ENCODE measurements at regions of chr1 and their contacts with region 1.

Region 1: DNA sequence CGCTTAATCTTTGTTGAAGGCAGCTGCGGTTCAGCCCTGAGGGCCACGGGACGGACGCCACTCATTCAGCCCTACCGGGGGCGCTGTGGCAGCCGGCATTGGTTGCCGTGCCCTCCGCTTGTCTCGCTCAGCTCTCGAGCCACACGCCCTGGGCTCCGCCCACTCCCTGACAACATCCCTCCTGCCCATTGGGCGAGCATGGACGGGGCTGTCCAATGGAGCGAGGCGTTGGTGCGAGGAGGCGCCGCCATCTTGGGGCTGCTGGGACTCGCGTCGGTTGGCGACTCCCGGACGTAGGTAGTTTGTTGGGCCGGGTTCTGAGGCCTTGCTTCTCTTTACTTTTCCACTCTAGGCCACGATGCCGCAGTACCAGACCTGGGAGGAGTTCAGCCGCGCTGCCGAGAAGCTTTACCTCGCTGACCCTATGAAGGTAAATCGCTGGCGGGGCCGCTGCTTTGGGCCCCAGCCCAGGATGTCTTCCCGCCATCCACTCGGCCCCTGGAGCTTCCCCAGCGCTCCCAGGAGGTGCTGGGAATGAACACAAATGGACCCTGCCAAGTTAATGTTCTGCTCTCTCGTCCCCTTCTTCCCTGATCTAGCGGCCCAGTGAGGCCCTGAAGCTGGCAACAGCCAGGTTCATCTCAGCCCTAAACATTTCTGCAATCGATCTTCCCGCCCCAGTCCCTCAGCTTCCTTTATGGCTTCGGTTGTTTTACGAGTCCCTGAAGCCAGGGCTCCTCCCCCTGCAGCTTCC is at the start of gene SRP9:
- DNase-seq: peak; percentile 99
- H3K4me3 ChIP-seq: peak within 1 kb of the TSS; percentile 68 to 94
- H3K4me3 Mint-ChIP-seq: no peak within 1 kb of the TSS
- H3K27ac ChIP-seq: peak within 1 kb of the TSS; percentile 94
- H3K27ac Mint-ChIP-seq: no peak within 1 kb of the TSS
- H3K4me1 ChIP-seq: peaks cover 57% of the 10 kb centered on the region
- H3K4me1 Mint-ChIP-seq: peaks cover 0 to 32% (median 27%) of the 10 kb centered on the region in 4 donors
- H3K27me3 ChIP-seq: no peaks in the 10 kb centered on the region
- H3K27me3 Mint-ChIP-seq: no peaks in the 10 kb centered on the region
- total RNA-seq, gene SRP9: 141 to 151 TPM

Region 2: DNA sequence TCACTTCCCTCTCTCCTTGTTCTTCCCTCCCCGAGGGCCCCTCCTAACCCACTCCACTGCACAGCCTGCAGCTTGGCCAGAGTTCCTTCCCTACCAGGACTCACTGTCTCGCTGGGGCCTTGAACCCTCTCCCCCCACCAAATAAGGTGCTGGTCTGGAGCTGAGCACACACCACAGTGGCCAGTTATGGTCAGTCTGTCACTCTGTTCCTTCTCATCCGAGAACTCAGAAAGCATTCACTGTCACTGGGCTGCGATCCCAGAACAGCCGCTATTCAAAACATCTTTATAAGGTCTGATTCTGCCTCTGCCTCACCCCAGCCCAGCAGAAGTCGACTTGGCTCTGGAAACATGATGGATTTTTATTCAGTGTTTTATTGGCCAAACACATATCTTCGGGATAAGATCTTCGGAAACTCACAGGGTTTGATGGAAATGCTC is 330.1 kb before region 1 on chr1:
- CTCF ChIA-PET with region 1: no interaction called
- POLR2A ChIA-PET with region 1: interaction called, 14 read pairs
- intact Hi-C with region 1: loop called (anchors 1 kb)
- DNase-seq: no peak
- H3K4me3 ChIP-seq: no peak overlapping the region
- H3K4me3 Mint-ChIP-seq: no peak overlapping the region
- H3K27ac ChIP-seq: no peak overlapping the region
- H3K27ac Mint-ChIP-seq: peak overlapping the region in 1 of 7 donors; percentile 17
- H3K4me1 ChIP-seq: peaks cover 47% of the 10 kb centered on the region
- H3K4me1 Mint-ChIP-seq: peaks cover 29 to 55% (median 43%) of the 10 kb centered on the region in 4 donors
- H3K27me3 ChIP-seq: no peaks in the 10 kb centered on the region
- H3K27me3 Mint-ChIP-seq: no peaks in the 10 kb centered on the region

Region 3: GRCh38 chr1:225526878-225527277 is 250.9 kb before region 1 on chr1:
- CTCF ChIA-PET with region 1: no interaction called
- POLR2A ChIA-PET with region 1: no interaction called
- intact Hi-C with region 1: no loop called
- DNase-seq: no peak
- H3K4me3 ChIP-seq: no peak overlapping the region
- H3K4me3 Mint-ChIP-seq: no peak overlapping the region
- H3K27ac ChIP-seq: no peak overlapping the region
- H3K27ac Mint-ChIP-seq: no peak overlapping the region
- H3K4me1 ChIP-seq: no peaks in the 10 kb centered on the region
- H3K4me1 Mint-ChIP-seq: peaks cover 0 to 3% (median 1%) of the 10 kb centered on the region in 4 donors
- H3K27me3 ChIP-seq: peaks cover 4% of the 10 kb centered on the region
- H3K27me3 Mint-ChIP-seq: peaks cover 7 to 12% of the 10 kb centered on the region in 2 donors

Region 4: DNA sequence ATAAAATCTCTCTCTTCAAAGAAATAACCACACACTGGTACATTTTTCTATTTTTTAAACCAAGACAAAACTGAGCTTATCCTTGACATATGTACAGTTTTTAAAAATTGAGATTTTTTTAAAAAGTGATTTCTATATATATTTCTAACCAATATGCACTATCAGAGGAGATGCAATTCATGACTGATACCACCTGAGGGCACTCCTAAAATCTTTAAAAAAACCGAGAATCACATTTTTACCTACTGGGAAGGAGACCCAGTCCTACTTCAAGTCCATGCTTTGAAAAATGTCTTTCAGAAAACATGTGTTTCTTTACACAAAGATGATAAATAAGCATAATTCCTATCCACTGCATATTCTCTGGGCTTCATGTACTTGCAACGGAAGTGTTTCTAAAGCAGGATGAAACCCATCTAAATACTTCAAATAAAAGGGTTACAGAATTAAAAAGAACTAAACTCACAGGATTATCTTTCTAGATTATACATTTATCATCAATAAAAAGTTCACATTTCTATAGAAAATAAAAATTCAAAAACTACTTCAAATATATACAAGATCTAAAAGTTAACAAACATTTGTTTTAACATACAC is 223.4 kb before region 1 on chr1:
- CTCF ChIA-PET with region 1: interaction called, 3 read pairs
- POLR2A ChIA-PET with region 1: no interaction called
- intact Hi-C with region 1: loop called (anchors 1 kb)
- DNase-seq: peak in 4 of 5 donors; percentile 15 to 28 (median 22)
- H3K4me3 ChIP-seq: no peak overlapping the region
- H3K4me3 Mint-ChIP-seq: no peak overlapping the region
- H3K27ac ChIP-seq: no peak overlapping the region
- H3K27ac Mint-ChIP-seq: no peak overlapping the region
- H3K4me1 ChIP-seq: no peaks in the 10 kb centered on the region
- H3K4me1 Mint-ChIP-seq: no peaks in the 10 kb centered on the region
- H3K27me3 ChIP-seq: no peaks in the 10 kb centered on the region
- H3K27me3 Mint-ChIP-seq: peaks cover 4 to 8% of the 10 kb centered on the region in 2 donors

Region 5: GRCh38 chr1:225691377-225691776 is 86.4 kb before region 1 on chr1:
- CTCF ChIA-PET with region 1: no interaction called
- POLR2A ChIA-PET with region 1: no interaction called
- intact Hi-C with region 1: no loop called
- DNase-seq: no peak
- H3K4me3 ChIP-seq: no peak overlapping the region
- H3K4me3 Mint-ChIP-seq: no peak overlapping the region
- H3K27ac ChIP-seq: no peak overlapping the region
- H3K27ac Mint-ChIP-seq: no peak overlapping the region
- H3K4me1 ChIP-seq: no peaks in the 10 kb centered on the region
- H3K4me1 Mint-ChIP-seq: no peaks in the 10 kb centered on the region
- H3K27me3 ChIP-seq: no peaks in the 10 kb centered on the region
- H3K27me3 Mint-ChIP-seq: peaks cover 3 to 8% of the 10 kb centered on the region in 2 donors

Region 6: GRCh38 chr1:225757927-225758656 is 19.7 kb before region 1 on chr1:
- CTCF ChIA-PET with region 1: no interaction called
- POLR2A ChIA-PET with region 1: no interaction called
- intact Hi-C with region 1: no loop called
- DNase-seq: no peak
- H3K4me3 ChIP-seq: no peak overlapping the region
- H3K4me3 Mint-ChIP-seq: no peak overlapping the region
- H3K27ac ChIP-seq: no peak overlapping the region
- H3K27ac Mint-ChIP-seq: peak overlapping the region in 1 of 7 donors; percentile 81
- H3K4me1 ChIP-seq: no peaks in the 10 kb centered on the region
- H3K4me1 Mint-ChIP-seq: no peaks in the 10 kb centered on the region
- H3K27me3 ChIP-seq: no peaks in the 10 kb centered on the region
- H3K27me3 Mint-ChIP-seq: peaks cover 4 to 8% of the 10 kb centered on the region in 2 donors

Region 7: DNA sequence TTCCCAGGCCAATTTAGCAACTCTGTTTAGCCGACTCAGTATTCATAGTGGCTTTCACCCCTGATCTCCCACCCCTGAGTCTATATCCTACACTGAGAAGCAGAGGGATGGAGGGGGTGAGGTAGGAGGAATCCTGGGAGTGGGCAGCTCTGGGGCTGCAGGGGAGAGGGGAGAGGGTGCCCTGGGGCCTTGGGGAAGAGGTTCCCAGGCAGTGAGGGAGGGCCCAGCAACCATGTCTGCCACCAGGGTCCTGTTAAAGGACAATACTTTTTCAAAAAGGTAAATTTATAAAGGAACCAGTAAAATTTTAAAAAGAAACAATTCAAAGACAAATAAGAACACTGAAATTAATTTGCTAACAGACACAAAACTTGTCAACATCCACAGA is 62.5 kb after region 1 on chr1:
- CTCF ChIA-PET with region 1: interaction called, 5 read pairs
- POLR2A ChIA-PET with region 1: interaction called, 17 read pairs
- intact Hi-C with region 1: loop called (anchors 5 kb)
- DNase-seq: no peak
- H3K4me3 ChIP-seq: no peak overlapping the region
- H3K4me3 Mint-ChIP-seq: no peak overlapping the region
- H3K27ac ChIP-seq: no peak overlapping the region
- H3K27ac Mint-ChIP-seq: peak overlapping the region in 4 of 7 donors; percentile 18 to 53 (median 42)
- H3K4me1 ChIP-seq: peaks cover 16% of the 10 kb centered on the region
- H3K4me1 Mint-ChIP-seq: peaks cover 13 to 35% (median 23%) of the 10 kb centered on the region in 4 donors
- H3K27me3 ChIP-seq: no peaks in the 10 kb centered on the region
- H3K27me3 Mint-ChIP-seq: no peaks in the 10 kb centered on the region

Region 8: GRCh38 chr1:225875044-225875814 is 97.5 kb after region 1 on chr1:
- CTCF ChIA-PET with region 1: interaction called, 19 read pairs
- POLR2A ChIA-PET with region 1: interaction called, 78 read pairs
- intact Hi-C with region 1: no loop called
- DNase-seq: no peak
- H3K4me3 ChIP-seq: no peak overlapping the region
- H3K4me3 Mint-ChIP-seq: peak overlapping the region; percentile 4 to 63 (median 57)
- H3K27ac ChIP-seq: peak overlapping the region; percentile 26
- H3K27ac Mint-ChIP-seq: peak overlapping the region; percentile 79 to 97 (median 83)
- H3K4me1 ChIP-seq: peaks cover 77% of the 10 kb centered on the region
- H3K4me1 Mint-ChIP-seq: peaks cover 52 to 93% (median 73%) of the 10 kb centered on the region in 4 donors
- H3K27me3 ChIP-seq: no peaks in the 10 kb centered on the region
- H3K27me3 Mint-ChIP-seq: no peaks in the 10 kb centered on the region

Region 9: DNA sequence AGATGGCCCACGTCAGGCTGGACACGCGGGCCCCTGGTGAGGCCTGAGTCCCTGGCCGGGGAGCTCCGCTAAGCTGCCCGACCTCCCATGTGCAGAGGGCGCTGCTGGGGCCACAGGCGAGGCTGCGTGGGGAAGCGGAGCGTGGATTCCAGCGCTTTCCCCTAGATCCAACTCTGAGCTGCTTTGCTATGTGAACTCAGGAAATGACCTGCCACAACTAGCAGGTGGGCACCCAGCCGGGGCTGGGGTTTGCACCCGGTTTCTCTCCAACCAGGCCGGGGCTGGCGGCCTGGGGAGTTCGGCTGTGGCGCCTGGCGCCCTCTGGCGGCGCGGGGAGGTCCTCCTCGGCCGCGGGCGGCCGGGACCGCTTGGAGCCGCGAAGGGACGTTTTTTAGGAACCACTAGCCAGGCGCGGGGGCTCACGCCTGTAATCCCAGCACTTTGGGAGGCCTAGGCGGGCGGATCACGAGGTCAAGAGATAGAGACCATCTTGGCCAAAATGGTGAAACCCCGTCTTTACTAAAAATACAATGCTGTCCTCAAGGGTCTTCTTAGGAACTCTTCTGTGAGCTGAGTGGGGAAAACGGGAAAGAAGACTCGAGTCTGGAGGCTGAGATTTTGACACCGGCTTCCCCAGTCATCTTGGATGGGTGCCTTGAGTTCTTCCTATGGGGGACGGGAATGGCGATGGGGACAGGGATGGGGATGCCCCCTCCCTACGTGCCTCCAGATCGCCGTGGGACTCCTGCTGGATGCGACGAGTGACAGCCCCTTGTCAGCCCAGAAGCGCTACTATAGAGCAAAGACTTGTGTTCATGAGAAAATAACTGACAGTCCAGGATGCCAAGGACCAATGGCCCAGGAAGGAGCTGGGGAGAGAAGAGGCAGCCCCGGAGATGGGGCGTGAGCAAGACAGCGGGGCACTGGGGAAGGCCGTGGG is 133.7 kb after region 1 on chr1:
- CTCF ChIA-PET with region 1: interaction called, 27 read pairs
- POLR2A ChIA-PET with region 1: interaction called, 49 read pairs
- intact Hi-C with region 1: loop called (anchors 1 kb)
- DNase-seq: peak; percentile 54 to 79 (median 70)
- H3K4me3 ChIP-seq: no peak overlapping the region
- H3K4me3 Mint-ChIP-seq: peak overlapping the region in 2 of 8 donors; percentile 14 to 21
- H3K27ac ChIP-seq: no peak overlapping the region
- H3K27ac Mint-ChIP-seq: peak overlapping the region in 2 of 7 donors; percentile 51 to 64
- H3K4me1 ChIP-seq: peaks cover 25% of the 10 kb centered on the region
- H3K4me1 Mint-ChIP-seq: peaks cover 18 to 33% (median 25%) of the 10 kb centered on the region in 4 donors
- H3K27me3 ChIP-seq: no peaks in the 10 kb centered on the region
- H3K27me3 Mint-ChIP-seq: no peaks in the 10 kb centered on the region

Region 10: GRCh38 chr1:225999227-225999911 is 221.6 kb after region 1 on chr1 and contains the start of gene SDE2:
- CTCF ChIA-PET with region 1: interaction called, 5 read pairs
- POLR2A ChIA-PET with region 1: interaction called, 39 read pairs
- intact Hi-C with region 1: no loop called
- DNase-seq: peak; percentile 99 to 100 (median 100)
- H3K4me3 ChIP-seq: peak within 1 kb of the TSS; percentile 78 to 99
- H3K4me3 Mint-ChIP-seq: peak within 1 kb of the TSS; percentile 99 to 100 (median 100)
- H3K27ac ChIP-seq: peak within 1 kb of the TSS; percentile 98
- H3K27ac Mint-ChIP-seq: peak within 1 kb of the TSS; percentile 100
- H3K4me1 ChIP-seq: peaks cover 81% of the 10 kb centered on the region
- H3K4me1 Mint-ChIP-seq: peaks cover 44 to 78% (median 61%) of the 10 kb centered on the region in 4 donors
- H3K27me3 ChIP-seq: no peaks in the 10 kb centered on the region
- H3K27me3 Mint-ChIP-seq: no peaks in the 10 kb centered on the region
- total RNA-seq, gene SDE2: 21.1 to 21.2 TPM